Activated CD4-positive, alpha-beta memory T cell treated with anti-CD3 and anti-CD28 coated beads for 36 hours (primary cell): ENCODE measurements at regions of chr6 and their contacts with region 1.

Region 1: DNA sequence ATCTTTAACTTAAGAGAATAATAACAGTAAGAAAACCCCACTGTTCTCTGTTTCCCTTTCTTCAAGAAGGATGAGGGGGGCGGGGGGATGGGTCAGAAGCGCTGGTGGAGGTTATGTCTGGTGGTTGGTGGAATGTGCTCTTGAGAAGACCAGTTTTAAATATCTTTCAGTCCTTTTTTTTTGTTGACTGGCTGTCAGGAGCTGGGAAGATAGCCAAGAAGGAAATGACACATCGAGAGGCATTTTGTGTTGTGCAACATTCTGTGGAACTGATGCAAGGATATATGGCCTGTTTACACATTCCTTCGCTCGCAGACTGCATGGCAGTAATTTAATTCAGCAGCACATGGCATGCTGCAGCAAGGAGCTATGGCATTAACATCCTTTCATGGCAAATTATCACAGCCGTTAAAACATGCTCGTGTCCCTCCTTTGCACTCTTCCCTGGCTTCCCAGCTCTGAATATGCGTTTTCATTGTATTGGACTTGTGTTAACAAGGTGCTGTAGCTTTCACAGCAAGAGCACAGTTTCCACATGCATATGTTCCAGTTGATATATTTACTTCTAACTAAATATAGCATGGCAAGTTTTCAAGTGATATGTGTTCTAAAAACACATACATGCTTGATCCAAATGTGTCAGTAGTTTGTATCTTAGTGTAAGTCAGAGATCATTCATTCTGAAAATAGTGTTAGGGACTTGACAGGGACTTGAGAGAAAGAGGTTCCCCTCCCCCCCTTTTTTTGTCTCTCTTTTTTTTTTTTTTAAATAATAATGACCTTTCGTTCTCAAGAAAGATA is 68.2 kb upstream of the SUPT3H start:
- DNase-seq: peak; percentile 72
- H3K4me3 Mint-ChIP-seq: peak overlapping the region; percentile 34
- H3K27ac Mint-ChIP-seq: peak overlapping the region; percentile 88
- H3K4me1 Mint-ChIP-seq: peaks cover 92% of the 10 kb centered on the region
- H3K27me3 Mint-ChIP-seq: no peaks in the 10 kb centered on the region

Region 2: GRCh38 chr6:45138765-45139164 is 307.2 kb before region 1 on chr6:
- CTCF ChIA-PET with region 1: no interaction called
- POLR2A ChIA-PET with region 1: no interaction called
- intact Hi-C with region 1: no loop called
- DNase-seq: no peak
- H3K4me3 Mint-ChIP-seq: no peak overlapping the region
- H3K27ac Mint-ChIP-seq: no peak overlapping the region
- H3K4me1 Mint-ChIP-seq: no peaks in the 10 kb centered on the region
- H3K27me3 Mint-ChIP-seq: no peaks in the 10 kb centered on the region

Region 3: GRCh38 chr6:45300736-45301135 is 145.2 kb before region 1 on chr6:
- CTCF ChIA-PET with region 1: no interaction called
- POLR2A ChIA-PET with region 1: no interaction called
- intact Hi-C with region 1: no loop called
- DNase-seq: no peak
- H3K4me3 Mint-ChIP-seq: no peak overlapping the region
- H3K27ac Mint-ChIP-seq: no peak overlapping the region
- H3K4me1 Mint-ChIP-seq: no peaks in the 10 kb centered on the region
- H3K27me3 Mint-ChIP-seq: no peaks in the 10 kb centered on the region

Region 4: GRCh38 chr6:45371924-45372573 is 73.9 kb before region 1 on chr6:
- CTCF ChIA-PET with region 1: no interaction called
- POLR2A ChIA-PET with region 1: no interaction called
- intact Hi-C with region 1: no loop called
- DNase-seq: no peak
- H3K4me3 Mint-ChIP-seq: no peak overlapping the region
- H3K27ac Mint-ChIP-seq: peak overlapping the region; percentile 18
- H3K4me1 Mint-ChIP-seq: peaks cover 37% of the 10 kb centered on the region
- H3K27me3 Mint-ChIP-seq: no peaks in the 10 kb centered on the region

Region 5: DNA sequence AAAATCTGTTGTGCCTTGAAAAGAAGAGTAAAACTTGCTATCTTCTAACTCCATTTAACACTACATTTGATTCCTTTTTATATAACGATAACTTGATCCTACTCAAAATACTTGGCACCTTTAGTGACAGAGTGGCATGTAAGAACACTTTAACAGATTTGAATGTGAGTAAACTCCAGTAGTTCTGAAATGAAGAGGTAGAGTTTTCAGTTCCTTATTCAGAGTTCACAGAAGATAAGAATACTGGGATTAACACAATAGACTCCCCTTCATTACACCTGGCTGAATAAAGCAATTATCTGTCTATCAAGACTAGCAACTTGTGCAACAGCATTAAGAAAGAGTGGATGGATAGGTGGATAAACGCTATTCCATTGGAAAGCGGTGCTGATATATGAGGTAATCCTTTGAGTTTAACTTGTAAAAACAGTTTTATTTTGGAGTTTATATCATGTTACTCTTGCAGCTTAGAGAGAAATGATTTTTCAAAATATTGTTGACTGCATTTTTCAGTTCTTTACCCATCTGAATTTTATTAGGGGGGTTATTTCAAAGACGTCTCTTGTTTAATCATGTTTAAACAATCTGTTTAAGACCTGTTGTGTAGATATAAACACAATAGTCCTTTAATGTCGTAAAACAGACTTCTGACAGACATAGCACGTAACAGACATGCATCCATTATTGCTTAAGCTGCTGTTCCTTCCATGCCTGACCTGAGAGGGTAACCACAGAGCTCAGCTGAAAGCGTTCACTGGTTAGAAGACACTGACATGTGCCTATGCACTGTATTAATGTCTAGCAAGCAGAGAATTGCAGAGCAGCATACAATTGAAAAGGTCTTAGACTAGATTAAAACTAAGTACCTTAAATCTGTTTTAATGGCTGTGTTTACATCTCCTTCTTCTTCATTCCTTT is 34.1 kb after region 1 on chr6:
- CTCF ChIA-PET with region 1: no interaction called
- POLR2A ChIA-PET with region 1: no interaction called
- intact Hi-C with region 1: loop called (anchors 2 kb)
- DNase-seq: no peak
- H3K4me3 Mint-ChIP-seq: no peak overlapping the region
- H3K27ac Mint-ChIP-seq: no peak overlapping the region
- H3K4me1 Mint-ChIP-seq: peaks cover 17% of the 10 kb centered on the region
- H3K27me3 Mint-ChIP-seq: no peaks in the 10 kb centered on the region

Region 6: GRCh38 chr6:45486736-45487135 is 40.8 kb after region 1 on chr6:
- CTCF ChIA-PET with region 1: no interaction called
- POLR2A ChIA-PET with region 1: interaction called, 3 read pairs
- intact Hi-C with region 1: loop called (anchors 1 kb)
- DNase-seq: peak; percentile 45
- H3K4me3 Mint-ChIP-seq: peak overlapping the region; percentile 21
- H3K27ac Mint-ChIP-seq: peak overlapping the region; percentile 67
- H3K4me1 Mint-ChIP-seq: peaks cover 56% of the 10 kb centered on the region
- H3K27me3 Mint-ChIP-seq: no peaks in the 10 kb centered on the region